SK-N-SH (cell line): ENCODE measurements at regions of chr6 and their contacts with region 1.

Region 1: GRCh38 chr6:127516666-127517273 is 2.4 kb downstream of the MTCL3 start:
- DNase-seq: peak; percentile 71
- H3K4me3 ChIP-seq: peak overlapping the region; percentile 68 to 78
- H3K27ac ChIP-seq: peak overlapping the region; percentile 11 to 85; a peak in 3 of 4 replicates
- H3K4me1 ChIP-seq: peaks cover 4 to 17% of the 10 kb centered on the region in 2 experiments; a peak in 3 of 4 replicates
- H3K27me3 ChIP-seq: no peaks in the 10 kb centered on the region
- CTCF ChIP-seq: peak; percentile 84
- EP300 ChIP-seq: no peak
- RAD21 ChIP-seq: 0 out of 2 replicates have a peak, but pooled peaks have one; percentile 23

Region 2: GRCh38 chr6:127266178-127266891 is 250.4 kb before region 1 on chr6 and contains the start of gene RNF146:
- CTCF ChIA-PET with region 1: interaction called, 6 read pairs
- POLR2A ChIA-PET with region 1: interaction called, 14 read pairs
- DNase-seq: peak; percentile 94
- H3K4me3 ChIP-seq: peak within 1 kb of the TSS; percentile 71 to 96
- H3K27ac ChIP-seq: peak within 1 kb of the TSS; percentile 91 to 98
- H3K4me1 ChIP-seq: peaks cover 0 to 5% of the 10 kb centered on the region in 2 experiments; a peak in 2 of 4 replicates
- H3K27me3 ChIP-seq: no peaks in the 10 kb centered on the region; the same call in 1 of the 2 replicates
- CTCF ChIP-seq: peak; percentile 90
- EP300 ChIP-seq: no peak
- RAD21 ChIP-seq: peak; percentile 50
- polyA plus RNA-seq, gene RNF146: 29.2 and 44.3 TPM in 2 replicates

Region 3: GRCh38 chr6:127464881-127465459 is 51.8 kb before region 1 on chr6:
- CTCF ChIA-PET with region 1: interaction called, 22 read pairs
- POLR2A ChIA-PET with region 1: interaction called, 9 read pairs
- DNase-seq: peak; percentile 65
- H3K4me3 ChIP-seq: no peak overlapping the region; a peak in 1 of 4 replicates
- H3K27ac ChIP-seq: peak overlapping the region in 1 of 2 experiments; percentile 34; a peak in 2 of 4 replicates
- H3K4me1 ChIP-seq: peaks cover 0 to 4% of the 10 kb centered on the region in 2 experiments; a peak in 1 of 4 replicates
- H3K27me3 ChIP-seq: no peaks in the 10 kb centered on the region
- CTCF ChIP-seq: peak; percentile 96
- EP300 ChIP-seq: no peak
- RAD21 ChIP-seq: peak; percentile 77

Region 4: DNA sequence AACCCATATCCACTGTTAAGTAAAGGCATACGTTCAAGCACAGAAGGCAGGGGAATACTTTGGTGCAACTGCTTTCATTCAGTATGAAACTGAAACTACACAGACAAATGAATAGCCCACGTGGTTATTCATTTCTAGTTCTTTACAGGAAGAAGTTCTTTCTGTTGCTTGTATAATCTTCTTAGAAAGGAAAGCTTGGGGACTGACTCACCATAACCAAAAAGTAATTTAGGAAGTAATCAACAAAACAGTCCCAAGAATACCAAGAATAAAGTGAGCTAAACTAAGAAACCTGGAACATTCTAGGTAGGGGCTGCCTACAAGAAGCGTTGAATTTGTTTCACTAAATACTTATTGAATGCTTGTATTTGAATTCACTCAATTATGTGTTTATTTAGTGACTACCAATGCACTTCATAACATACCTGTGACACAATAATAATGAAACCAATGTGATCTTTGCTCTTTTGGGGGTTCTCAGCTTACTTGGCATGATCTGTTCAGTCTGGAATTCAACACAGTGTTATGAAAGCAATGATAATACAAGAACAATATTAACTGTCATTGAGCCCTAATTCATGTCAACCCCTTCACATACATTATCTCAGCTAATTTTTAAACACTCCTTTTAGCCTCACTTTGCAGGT is 32.4 kb before region 1 on chr6:
- CTCF ChIA-PET with region 1: interaction called, 26 read pairs
- POLR2A ChIA-PET with region 1: interaction called, 3 read pairs
- DNase-seq: no peak
- H3K4me3 ChIP-seq: peak overlapping the region in 1 of 2 experiments; percentile 21; a peak in 1 of 4 replicates
- H3K27ac ChIP-seq: peak overlapping the region in 1 of 2 experiments; percentile 66; a peak in 2 of 4 replicates
- H3K4me1 ChIP-seq: peaks cover 0 to 13% of the 10 kb centered on the region in 2 experiments; a peak in 1 of 4 replicates
- H3K27me3 ChIP-seq: no peaks in the 10 kb centered on the region
- CTCF ChIP-seq: no peak
- EP300 ChIP-seq: no peak
- RAD21 ChIP-seq: no peak

Region 5: GRCh38 chr6:127533011-127533410 is 16.2 kb after region 1 on chr6:
- CTCF ChIA-PET with region 1: interaction called, 77 read pairs
- POLR2A ChIA-PET with region 1: interaction called, 8 read pairs
- DNase-seq: no peak
- H3K4me3 ChIP-seq: no peak overlapping the region
- H3K27ac ChIP-seq: no peak overlapping the region
- H3K4me1 ChIP-seq: no peaks in the 10 kb centered on the region
- H3K27me3 ChIP-seq: peaks cover 7% of the 10 kb centered on the region; the same call in 1 of the 2 replicates
- CTCF ChIP-seq: no peak
- EP300 ChIP-seq: no peak
- RAD21 ChIP-seq: no peak